ENCODE measurements at regions of chr16 and their contacts with region 1.

Region 1: DNA sequence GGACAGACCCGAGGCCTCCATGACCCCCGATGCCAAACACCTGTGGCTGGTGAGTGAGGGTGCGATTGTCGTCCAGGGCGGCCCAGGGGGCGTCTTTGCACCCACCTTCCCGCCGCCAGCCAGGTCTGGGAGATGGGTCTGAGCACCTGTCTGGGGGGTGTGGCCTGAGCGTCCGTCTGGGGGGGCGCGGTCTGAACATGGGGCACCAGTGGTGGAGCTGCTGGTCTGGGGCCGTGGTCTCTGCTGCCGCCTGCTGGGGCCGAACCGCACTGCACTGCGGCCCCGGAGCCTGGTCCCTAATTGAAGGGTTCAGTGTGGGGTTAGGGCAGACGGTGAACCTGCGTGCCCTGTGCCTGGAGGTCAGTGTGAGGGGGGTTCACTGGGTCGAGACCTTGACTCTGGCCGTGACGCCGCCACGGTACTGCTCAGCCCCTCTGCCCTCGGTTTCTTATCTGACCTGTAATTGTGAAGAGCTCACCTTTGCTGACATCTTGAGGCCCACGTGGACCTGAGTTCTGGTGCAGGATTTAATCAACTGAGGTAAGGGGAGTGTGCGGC is 12.6 kb upstream of the TCF25 start:
- DNase-seq: peak; percentile 77
- H3K4me3 ChIP-seq: no peak overlapping the region
- H3K27ac ChIP-seq: no peak overlapping the region
- H3K4me1 ChIP-seq: peaks cover 53% of the 10 kb centered on the region
- CTCF ChIP-seq: peak; percentile 96

Region 2: GRCh38 chr16:89706507-89707263 is 154.1 kb before region 1 on chr16:
- CTCF ChIA-PET with region 1: no interaction called
- POLR2A ChIA-PET with region 1: no interaction called
- intact Hi-C with region 1: loop called (anchors 2 kb)
- DNase-seq: no peak
- H3K4me3 ChIP-seq: no peak overlapping the region
- H3K27ac ChIP-seq: no peak overlapping the region
- H3K4me1 ChIP-seq: peaks cover 7% of the 10 kb centered on the region
- CTCF ChIP-seq: no peak

Region 3: DNA sequence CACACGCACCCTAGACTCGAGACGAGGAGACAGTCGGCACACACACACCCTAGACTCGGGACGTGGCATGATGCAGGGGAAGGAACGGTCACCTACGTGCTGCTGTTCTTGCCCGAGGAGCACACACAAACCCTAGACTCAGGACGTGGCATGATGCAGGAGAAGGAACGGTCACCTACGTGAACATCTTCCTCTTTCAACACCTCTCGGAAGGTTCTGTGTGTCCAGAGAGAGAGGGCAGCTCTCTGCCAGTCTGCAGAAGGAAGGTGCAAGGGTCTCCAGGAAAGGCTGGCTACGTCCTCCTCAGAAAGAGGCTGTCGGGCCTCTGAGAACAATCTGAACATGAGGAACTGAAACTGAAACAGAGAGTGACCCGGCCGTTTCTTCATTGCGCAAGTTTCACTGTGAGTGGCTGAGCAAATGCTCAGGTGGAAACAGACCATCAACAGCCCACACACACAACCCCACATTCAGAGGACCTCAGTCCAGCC is 96.1 kb before region 1 on chr16:
- CTCF ChIA-PET with region 1: no interaction called
- POLR2A ChIA-PET with region 1: no interaction called
- intact Hi-C with region 1: loop called (anchors 5 kb)
- DNase-seq: peak; percentile 93
- H3K4me3 ChIP-seq: peak overlapping the region; percentile 32
- H3K27ac ChIP-seq: peak overlapping the region; percentile 84
- H3K4me1 ChIP-seq: peaks cover 20% of the 10 kb centered on the region
- CTCF ChIP-seq: no peak

Region 4: GRCh38 chr16:89842471-89843408 is 18.1 kb before region 1 on chr16:
- CTCF ChIA-PET with region 1: interaction called, 3 read pairs
- POLR2A ChIA-PET with region 1: interaction called, 6 read pairs
- intact Hi-C with region 1: loop called (anchors 1 kb)
- DNase-seq: no peak
- H3K4me3 ChIP-seq: no peak overlapping the region
- H3K27ac ChIP-seq: peak overlapping the region; percentile 88
- H3K4me1 ChIP-seq: peaks cover 73% of the 10 kb centered on the region
- CTCF ChIP-seq: no peak

Region 5: GRCh38 chr16:89898201-89898967 is 37.6 kb after region 1 on chr16:
- CTCF ChIA-PET with region 1: no interaction called
- POLR2A ChIA-PET with region 1: no interaction called
- intact Hi-C with region 1: no loop called
- DNase-seq: no peak
- H3K4me3 ChIP-seq: no peak overlapping the region
- H3K27ac ChIP-seq: no peak overlapping the region
- H3K4me1 ChIP-seq: no peaks in the 10 kb centered on the region
- CTCF ChIP-seq: no peak